Dendritic cell treated with granulocyte-macrophage colony-stimulating factor and Interleukin-4, amounts not matched to agents 40 ng/mL and 50 ng/mL, for 4 days (primary cell): ENCODE measurements at regions of chr1 and their contacts with region 1.

Region 1: GRCh38 chr1:234851450-234852438 is 241.8 kb upstream of the IRF2BP2 start:
- H3K4me3 Mint-ChIP-seq: peak overlapping the region; percentile 9
- H3K27ac Mint-ChIP-seq: peak overlapping the region; percentile 96
- H3K4me1 Mint-ChIP-seq: peaks cover 91% of the 10 kb centered on the region
- H3K27me3 Mint-ChIP-seq: no peaks in the 10 kb centered on the region

Region 2: DNA sequence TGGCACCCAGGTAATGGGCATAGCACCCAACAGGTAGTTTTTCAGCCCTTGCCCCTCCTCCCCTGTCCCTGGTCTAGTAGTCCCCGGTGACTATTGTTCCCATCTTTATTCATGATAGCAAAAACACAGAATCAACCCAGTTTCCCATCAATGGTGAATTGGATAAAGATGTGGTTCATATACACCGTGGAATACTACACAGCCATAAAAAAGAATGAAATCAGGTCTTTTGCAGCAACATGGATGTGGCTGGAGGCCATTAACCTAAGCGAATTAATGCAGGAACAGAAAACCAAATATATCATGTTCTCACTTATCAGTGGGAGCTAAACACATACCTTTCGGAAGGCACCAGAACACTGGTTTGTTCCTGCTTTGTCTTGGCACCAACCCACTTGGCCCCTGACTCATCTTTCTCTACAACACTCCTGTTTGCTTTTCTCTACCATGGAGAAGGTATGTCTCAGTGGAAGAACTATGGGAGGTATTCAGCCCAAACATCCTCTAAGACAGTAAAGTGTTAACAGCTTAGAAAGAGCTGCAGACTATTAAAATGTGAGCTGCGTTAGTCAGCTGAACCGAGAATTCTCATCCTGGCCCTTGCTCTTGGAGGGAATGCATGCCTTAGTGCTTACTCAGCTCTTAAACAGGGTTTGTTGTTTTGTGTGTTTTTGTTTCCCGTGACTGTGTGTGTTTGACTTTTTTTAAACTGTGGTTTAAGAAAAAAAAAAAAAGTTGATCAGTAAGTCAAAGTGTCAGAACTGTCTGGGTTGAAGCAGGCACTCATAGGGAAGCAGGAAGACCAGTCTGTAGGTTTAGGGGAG is 73.9 kb after region 1 on chr1:
- intact Hi-C with region 1: loop called (anchors 5 kb)
- H3K4me3 Mint-ChIP-seq: peak overlapping the region; percentile 7
- H3K27ac Mint-ChIP-seq: peak overlapping the region; percentile 97
- H3K4me1 Mint-ChIP-seq: peaks cover 89% of the 10 kb centered on the region
- H3K27me3 Mint-ChIP-seq: no peaks in the 10 kb centered on the region

Region 3: GRCh38 chr1:235259133-235259778 is 407.5 kb after region 1 on chr1:
- intact Hi-C with region 1: no loop called
- H3K4me3 Mint-ChIP-seq: no peak overlapping the region
- H3K27ac Mint-ChIP-seq: no peak overlapping the region
- H3K4me1 Mint-ChIP-seq: peaks cover 6% of the 10 kb centered on the region
- H3K27me3 Mint-ChIP-seq: no peaks in the 10 kb centered on the region